CD8-positive, alpha-beta T cell (primary cell): ENCODE measurements at regions of chr12 and their contacts with region 1.

Region 1: GRCh38 chr12:111405149-111405860 is 418 bp upstream of the SH2B3 start:
- DNase-seq: peak; percentile 97 to 100 (median 98)
- ATAC-seq: peak; percentile 83
- H3K4me3 ChIP-seq: peak overlapping the region; percentile 55 to 98
- H3K4me3 Mint-ChIP-seq: peak overlapping the region; percentile 85
- H3K27ac ChIP-seq: peak overlapping the region; percentile 73 to 85
- H3K27ac Mint-ChIP-seq: peak overlapping the region; percentile 89
- H3K4me1 ChIP-seq: peaks cover 54% of the 10 kb centered on the region
- H3K4me1 Mint-ChIP-seq: peaks cover 55% of the 10 kb centered on the region
- H3K27me3 ChIP-seq: no peaks in the 10 kb centered on the region
- H3K27me3 Mint-ChIP-seq: no peaks in the 10 kb centered on the region
- CTCF ChIP-seq: peak; percentile 52

Region 2: GRCh38 chr12:110124184-110124995 is 1280.9 kb before region 1 on chr12 and contains the start of gene IFT81:
- CTCF ChIA-PET with region 1: no interaction called
- POLR2A ChIA-PET with region 1: no interaction called
- intact Hi-C with region 1: loop called in 1 of 2 experiments (anchors 10 kb)
- DNase-seq: peak; percentile 94 to 99 (median 96)
- ATAC-seq: peak; percentile 95
- H3K4me3 ChIP-seq: peak within 1 kb of the TSS; percentile 69 to 96
- H3K4me3 Mint-ChIP-seq: peak within 1 kb of the TSS; percentile 91
- H3K27ac ChIP-seq: peak within 1 kb of the TSS; percentile 60 to 73
- H3K27ac Mint-ChIP-seq: peak within 1 kb of the TSS; percentile 83
- H3K4me1 ChIP-seq: peaks cover 10% of the 10 kb centered on the region
- H3K4me1 Mint-ChIP-seq: peaks cover 8% of the 10 kb centered on the region
- H3K27me3 ChIP-seq: no peaks in the 10 kb centered on the region
- H3K27me3 Mint-ChIP-seq: peaks cover 3% of the 10 kb centered on the region
- CTCF ChIP-seq: no peak
- total RNA-seq, gene IFT81: 0.25 to 0.43 TPM

Region 3: DNA sequence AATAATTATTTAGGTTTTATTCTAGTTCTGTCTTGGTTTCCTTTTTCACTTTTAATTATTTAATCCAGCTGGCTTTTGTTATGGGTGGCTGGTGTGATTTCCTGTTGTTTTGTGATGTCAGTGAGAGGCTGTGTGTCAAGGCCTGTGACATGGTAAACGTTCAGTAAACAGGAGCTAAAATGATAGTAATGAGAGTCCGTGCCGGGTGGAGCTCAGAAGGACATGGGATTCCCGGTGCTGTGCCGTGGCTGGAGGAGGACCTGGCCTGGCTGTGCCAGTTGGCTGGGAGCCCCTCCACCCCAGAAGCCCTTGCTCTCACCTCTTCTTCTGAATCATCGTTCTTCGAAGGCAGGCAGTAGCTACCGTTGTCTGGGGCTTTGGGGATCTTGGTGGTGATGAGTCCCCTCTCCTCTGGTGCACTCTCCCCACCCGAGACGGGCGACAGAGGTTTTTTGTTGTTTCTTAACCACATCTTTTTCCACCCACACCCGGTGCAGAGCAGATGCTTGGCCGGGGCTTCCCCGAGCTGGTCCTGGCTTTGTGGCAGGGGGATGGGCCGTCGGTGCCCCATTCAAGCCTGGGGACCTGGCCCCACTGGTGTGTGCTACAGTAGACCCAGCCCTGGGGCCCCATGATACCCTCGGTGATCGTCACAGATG is 29.5 kb after region 1 on chr12:
- CTCF ChIA-PET with region 1: interaction called, 1,191 read pairs
- POLR2A ChIA-PET with region 1: interaction called, 34 read pairs
- intact Hi-C with region 1: loop called (anchors 1 kb)
- DNase-seq: peak; percentile 70 to 96 (median 87)
- ATAC-seq: peak; percentile 70
- H3K4me3 ChIP-seq: peak overlapping the region; percentile 34 to 39
- H3K4me3 Mint-ChIP-seq: peak overlapping the region; percentile 82
- H3K27ac ChIP-seq: peak overlapping the region; percentile 91 to 98
- H3K27ac Mint-ChIP-seq: peak overlapping the region; percentile 100
- H3K4me1 ChIP-seq: peaks cover 99% of the 10 kb centered on the region
- H3K4me1 Mint-ChIP-seq: peaks cover 93% of the 10 kb centered on the region
- H3K27me3 ChIP-seq: no peaks in the 10 kb centered on the region
- H3K27me3 Mint-ChIP-seq: no peaks in the 10 kb centered on the region
- CTCF ChIP-seq: no peak

Region 4: DNA sequence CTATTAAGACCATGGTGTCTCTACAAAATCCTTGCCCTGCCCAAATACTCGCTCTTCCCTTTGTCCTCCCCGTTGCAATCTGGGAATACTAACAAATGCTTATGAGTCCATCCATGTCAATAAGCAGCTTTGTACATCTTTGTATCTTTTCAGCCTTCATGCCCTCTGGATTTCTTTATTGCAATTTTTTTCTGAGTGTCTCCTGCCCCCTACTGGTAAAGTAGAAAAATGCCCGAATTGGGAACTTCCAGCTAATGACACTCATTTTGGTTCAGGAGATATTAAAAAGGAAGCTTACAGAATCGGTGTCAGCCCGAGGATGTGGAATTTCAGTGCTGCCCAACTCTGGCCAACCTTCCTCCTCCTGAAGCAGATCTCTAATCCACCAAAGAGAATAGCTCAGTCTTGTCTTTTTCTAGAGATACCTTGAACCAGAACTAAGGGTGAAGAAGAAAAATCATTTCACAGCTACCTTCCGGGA is 46.4 kb after region 1 on chr12:
- CTCF ChIA-PET with region 1: interaction called, 1,191 read pairs
- POLR2A ChIA-PET with region 1: interaction called, 11 read pairs
- intact Hi-C with region 1: loop called in 1 of 2 experiments (anchors 1 kb)
- DNase-seq: peak in 2 of 9 experiments; percentile 72 to 79
- ATAC-seq: peak; percentile 71
- H3K4me3 ChIP-seq: no peak overlapping the region
- H3K4me3 Mint-ChIP-seq: no peak overlapping the region
- H3K27ac ChIP-seq: no peak overlapping the region
- H3K27ac Mint-ChIP-seq: peak overlapping the region; percentile 5
- H3K4me1 ChIP-seq: no peaks in the 10 kb centered on the region
- H3K4me1 Mint-ChIP-seq: peaks cover 20% of the 10 kb centered on the region
- H3K27me3 ChIP-seq: no peaks in the 10 kb centered on the region
- H3K27me3 Mint-ChIP-seq: no peaks in the 10 kb centered on the region
- CTCF ChIP-seq: peak; percentile 84

Region 5: DNA sequence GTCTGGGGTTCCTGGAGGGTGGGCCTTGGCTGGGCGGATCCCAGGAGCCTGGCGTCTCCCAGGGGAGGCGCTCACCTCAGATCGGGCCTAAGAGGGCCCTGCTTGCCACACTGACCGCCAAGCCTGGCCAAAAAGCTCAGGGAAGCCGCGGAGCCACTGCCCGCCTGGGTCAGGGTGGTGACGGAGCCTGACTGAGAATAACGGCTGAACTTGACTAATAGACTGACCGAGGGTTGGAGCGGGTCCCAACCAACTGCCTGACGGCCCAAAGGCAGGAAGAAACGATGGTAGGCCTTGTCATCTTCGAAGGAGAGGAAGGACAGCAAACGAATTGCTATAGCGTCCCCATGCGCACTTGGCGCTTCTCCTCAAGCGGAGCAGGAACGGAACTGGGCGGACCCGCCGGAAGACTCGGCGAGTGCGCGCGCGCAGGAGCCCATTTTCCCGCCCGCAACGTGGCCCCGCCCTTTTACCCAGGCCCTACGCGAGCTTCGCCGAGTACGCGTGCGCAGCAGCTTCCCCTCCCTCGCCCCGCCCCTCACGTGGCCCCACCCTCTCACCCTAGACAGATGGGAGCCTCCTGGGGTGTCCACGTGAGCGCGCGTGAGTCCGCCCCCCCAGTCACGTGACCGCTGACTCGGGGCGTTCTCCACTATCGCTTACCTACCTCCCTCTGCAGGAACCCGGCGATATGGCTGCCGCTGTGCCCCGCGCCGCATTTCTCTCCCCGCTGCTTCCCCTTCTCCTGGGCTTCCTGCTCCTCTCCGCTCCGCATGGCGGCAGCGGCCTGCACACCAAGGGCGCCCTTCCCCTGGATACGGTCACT is 607.7 kb after region 1 on chr12 and contains the starts of genes ERP29 and TMEM116:
- CTCF ChIA-PET with region 1: no interaction called
- POLR2A ChIA-PET with region 1: no interaction called
- intact Hi-C with region 1: loop called in 1 of 2 experiments (anchors 5 kb)
- DNase-seq: peak; percentile 99 to 100 (median 100)
- ATAC-seq: peak; percentile 82
- H3K4me3 ChIP-seq: peak within 1 kb of the TSS; percentile 94
- H3K4me3 Mint-ChIP-seq: peak within 1 kb of the TSS; percentile 88
- H3K27ac ChIP-seq: peak within 1 kb of the TSS; percentile 95
- H3K27ac Mint-ChIP-seq: peak within 1 kb of the TSS; percentile 99
- H3K4me1 ChIP-seq: peaks cover 43% of the 10 kb centered on the region
- H3K4me1 Mint-ChIP-seq: peaks cover 59% of the 10 kb centered on the region
- H3K27me3 ChIP-seq: no peaks in the 10 kb centered on the region
- H3K27me3 Mint-ChIP-seq: no peaks in the 10 kb centered on the region
- CTCF ChIP-seq: peak; percentile 66
- total RNA-seq, gene ERP29: 102 to 111 TPM
- total RNA-seq, gene TMEM116: 9.4 to 11.2 TPM